HepG2 (cell line): ENCODE measurements at regions of chr17 and their contacts with region 1.

Region 1: GRCh38 chr17:68600067-68600930 is 868 bp downstream of the FAM20A start:
- DNase-seq: peak; percentile 59
- ATAC-seq: peak; percentile 88
- H3K4me3 ChIP-seq: peak overlapping the region; percentile 60 to 79 (median 61)
- H3K27ac ChIP-seq: peak overlapping the region; percentile 77
- H3K4me1 ChIP-seq: peaks cover 57% of the 10 kb centered on the region
- H3K27me3 ChIP-seq: peaks cover 3 to 11% of the 10 kb centered on the region in 2 experiments; a peak in 1 of 5 replicates
- CTCF ChIP-seq: peak; percentile 92
- EP300 ChIP-seq: no peak
- POLR2A ChIP-seq: peak in 1 of 2 experiments; percentile 9; a peak in 2 of 4 replicates
- RAD21 ChIP-seq: peak; percentile 91

Region 2: GRCh38 chr17:68512247-68512982 is 87.9 kb before region 1 on chr17 and contains the start of gene PRKAR1A:
- CTCF ChIA-PET with region 1: no interaction called
- POLR2A ChIA-PET with region 1: interaction called, 8 read pairs
- in situ Hi-C with region 1: no loop called
- intact Hi-C with region 1: loop called (anchors 2 kb)
- DNase-seq: peak; percentile 92
- ATAC-seq: peak; percentile 88
- H3K4me3 ChIP-seq: peak within 1 kb of the TSS; percentile 91 to 95 (median 91)
- H3K27ac ChIP-seq: peak within 1 kb of the TSS; percentile 91
- H3K4me1 ChIP-seq: peaks cover 75% of the 10 kb centered on the region
- H3K27me3 ChIP-seq: no peaks in the 10 kb centered on the region; a peak in 1 of 5 replicates
- CTCF ChIP-seq: peak; percentile 4; the same call in 1 of the 2 replicates
- EP300 ChIP-seq: 0 out of 4 replicates have a peak, but pooled peaks of 1 of the 2 experiments have one; percentile 19
- POLR2A ChIP-seq: peak; percentile 82 to 86
- RAD21 ChIP-seq: peak; percentile 61; the same call in 1 of the 2 replicates
- total RNA-seq, gene PRKAR1A: 266 and 335 TPM in 2 replicates

Region 3: DNA sequence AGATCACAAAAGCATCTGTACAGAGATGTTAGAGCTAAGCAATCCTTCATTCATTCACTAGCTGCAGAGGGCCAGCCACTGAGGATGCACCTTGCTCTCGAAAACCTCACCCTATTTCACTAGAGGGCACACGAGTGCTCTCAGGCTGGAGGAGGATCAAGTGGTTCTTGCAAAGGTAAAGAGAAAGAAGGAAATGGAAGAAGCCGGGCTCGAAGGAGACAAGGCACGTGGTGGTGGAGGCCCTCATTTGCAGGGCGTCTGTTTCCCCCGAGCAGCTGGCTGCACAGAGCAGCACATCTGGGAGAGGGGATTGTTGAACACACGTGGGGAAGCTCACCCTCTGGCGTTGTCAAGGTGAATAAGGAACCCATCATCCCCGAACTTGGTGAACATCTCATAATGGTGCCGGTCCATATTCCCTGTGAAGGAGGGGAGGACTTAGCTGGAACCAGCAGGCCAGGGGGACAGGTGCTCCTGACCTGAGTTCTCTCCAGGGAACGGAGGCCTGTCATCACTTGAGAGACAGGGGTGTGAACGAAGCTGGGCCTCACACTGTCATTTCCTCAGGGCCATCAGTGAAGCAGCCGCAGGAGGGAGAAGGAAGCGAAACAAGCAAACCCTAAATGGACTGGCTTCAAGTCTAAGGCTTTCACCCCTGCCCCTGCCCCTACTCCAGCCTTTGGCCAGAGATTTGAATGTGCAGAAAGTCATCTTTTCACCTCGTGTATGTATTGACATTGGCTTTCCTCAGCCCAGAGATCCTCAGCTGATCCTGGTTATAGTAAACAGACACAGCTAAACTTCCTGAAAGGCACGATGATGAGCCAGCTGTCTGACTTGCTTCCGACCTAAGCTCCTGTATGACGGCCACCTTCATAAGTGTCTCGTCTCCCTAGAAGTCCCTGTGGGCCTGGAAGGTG is 60.5 kb before region 1 on chr17:
- CTCF ChIA-PET with region 1: interaction called, 6 read pairs
- POLR2A ChIA-PET with region 1: interaction called, 6 read pairs
- in situ Hi-C with region 1: loop called (anchors 5 kb)
- intact Hi-C with region 1: loop called (anchors 2 kb)
- DNase-seq: peak; percentile 24
- ATAC-seq: peak; percentile 4
- H3K4me3 ChIP-seq: no peak overlapping the region
- H3K27ac ChIP-seq: no peak overlapping the region
- H3K4me1 ChIP-seq: peaks cover 16% of the 10 kb centered on the region
- H3K27me3 ChIP-seq: no peaks in the 10 kb centered on the region
- CTCF ChIP-seq: peak; percentile 59
- EP300 ChIP-seq: no peak
- POLR2A ChIP-seq: 0 out of 4 replicates have a peak, but pooled peaks of 1 of the 2 experiments have one; percentile 15
- RAD21 ChIP-seq: no peak

Region 4: DNA sequence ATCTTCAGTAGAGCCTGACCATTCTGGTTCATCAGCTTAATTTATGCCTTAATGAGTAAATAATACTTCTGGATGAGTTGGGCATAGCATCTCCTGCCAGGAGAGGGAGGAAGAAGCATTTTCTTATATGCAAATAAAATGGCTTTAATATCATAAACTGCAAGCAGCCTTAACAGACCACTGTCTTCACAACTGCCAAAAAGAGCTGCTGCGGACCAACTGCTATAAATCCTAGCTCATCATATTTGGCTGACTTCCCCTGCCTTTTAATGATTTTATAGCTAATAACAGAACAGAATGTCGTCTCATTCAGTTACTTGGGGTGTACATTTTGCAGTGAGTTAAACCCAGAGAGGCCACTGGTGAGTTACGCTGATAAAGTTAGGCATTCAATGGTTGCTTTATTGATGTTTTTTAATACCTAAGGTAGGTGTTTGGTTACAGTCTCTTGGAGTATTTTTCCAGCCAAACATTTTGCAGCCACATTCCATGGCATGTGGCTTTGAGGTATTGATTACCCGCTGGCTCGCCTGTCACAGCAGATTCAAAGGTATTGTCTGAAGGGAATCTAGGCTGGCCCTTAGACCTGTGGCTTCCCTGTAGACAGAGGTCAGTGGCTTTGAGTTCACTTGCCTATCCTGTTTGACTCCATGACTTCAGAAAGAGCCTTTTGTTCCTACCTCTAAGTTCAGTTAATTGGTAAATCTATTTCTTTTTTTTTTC is 15.6 kb before region 1 on chr17:
- CTCF ChIA-PET with region 1: no interaction called
- POLR2A ChIA-PET with region 1: interaction called, 22 read pairs
- in situ Hi-C with region 1: no loop called
- intact Hi-C with region 1: loop called (anchors 1 kb)
- DNase-seq: peak; percentile 81
- ATAC-seq: peak; percentile 90
- H3K4me3 ChIP-seq: no peak overlapping the region
- H3K27ac ChIP-seq: peak overlapping the region; percentile 55
- H3K4me1 ChIP-seq: peaks cover 54% of the 10 kb centered on the region
- H3K27me3 ChIP-seq: no peaks in the 10 kb centered on the region
- CTCF ChIP-seq: no peak
- EP300 ChIP-seq: peak in 1 of 2 experiments; percentile 81; a peak in 2 of 4 replicates
- POLR2A ChIP-seq: no peak
- RAD21 ChIP-seq: no peak

Region 5: GRCh38 chr17:68640242-68640989 is 40.1 kb after region 1 on chr17:
- CTCF ChIA-PET with region 1: no interaction called
- POLR2A ChIA-PET with region 1: no interaction called
- in situ Hi-C with region 1: no loop called
- intact Hi-C with region 1: no loop called
- DNase-seq: no peak
- ATAC-seq: no peak
- H3K4me3 ChIP-seq: no peak overlapping the region
- H3K27ac ChIP-seq: no peak overlapping the region
- H3K4me1 ChIP-seq: no peaks in the 10 kb centered on the region
- H3K27me3 ChIP-seq: peaks cover 2 to 7% of the 10 kb centered on the region in 2 experiments; a peak in 3 of 5 replicates
- CTCF ChIP-seq: no peak
- EP300 ChIP-seq: no peak
- POLR2A ChIP-seq: no peak
- RAD21 ChIP-seq: no peak

Region 6: GRCh38 chr17:68759343-68760132 is 159.2 kb after region 1 on chr17:
- CTCF ChIA-PET with region 1: no interaction called
- POLR2A ChIA-PET with region 1: interaction called, 3 read pairs
- in situ Hi-C with region 1: no loop called
- intact Hi-C with region 1: loop called (anchors 2 kb)
- DNase-seq: peak; percentile 91
- ATAC-seq: peak; percentile 99
- H3K4me3 ChIP-seq: peak overlapping the region; percentile 60 to 67 (median 61)
- H3K27ac ChIP-seq: peak overlapping the region; percentile 92
- H3K4me1 ChIP-seq: peaks cover 35% of the 10 kb centered on the region
- H3K27me3 ChIP-seq: 0 out of 5 replicates have a peak, but pooled peaks cover 0 to 4% of the 10 kb centered on the region in 2 experiments
- CTCF ChIP-seq: peak; percentile 97
- EP300 ChIP-seq: peak in 1 of 2 experiments; percentile 58; a peak in 2 of 4 replicates
- POLR2A ChIP-seq: peak; percentile 63 to 90; a peak in 3 of 4 replicates
- RAD21 ChIP-seq: peak; percentile 97